Activated CD4-positive, alpha-beta memory T cell treated with anti-CD3 and anti-CD28 coated beads, Interleukin-2, amount 10 ng/mL, durations not matched to agents 7 days and 5 days (primary cell): ENCODE measurements at regions of chr2 and their contacts with region 1.

Region 1: DNA sequence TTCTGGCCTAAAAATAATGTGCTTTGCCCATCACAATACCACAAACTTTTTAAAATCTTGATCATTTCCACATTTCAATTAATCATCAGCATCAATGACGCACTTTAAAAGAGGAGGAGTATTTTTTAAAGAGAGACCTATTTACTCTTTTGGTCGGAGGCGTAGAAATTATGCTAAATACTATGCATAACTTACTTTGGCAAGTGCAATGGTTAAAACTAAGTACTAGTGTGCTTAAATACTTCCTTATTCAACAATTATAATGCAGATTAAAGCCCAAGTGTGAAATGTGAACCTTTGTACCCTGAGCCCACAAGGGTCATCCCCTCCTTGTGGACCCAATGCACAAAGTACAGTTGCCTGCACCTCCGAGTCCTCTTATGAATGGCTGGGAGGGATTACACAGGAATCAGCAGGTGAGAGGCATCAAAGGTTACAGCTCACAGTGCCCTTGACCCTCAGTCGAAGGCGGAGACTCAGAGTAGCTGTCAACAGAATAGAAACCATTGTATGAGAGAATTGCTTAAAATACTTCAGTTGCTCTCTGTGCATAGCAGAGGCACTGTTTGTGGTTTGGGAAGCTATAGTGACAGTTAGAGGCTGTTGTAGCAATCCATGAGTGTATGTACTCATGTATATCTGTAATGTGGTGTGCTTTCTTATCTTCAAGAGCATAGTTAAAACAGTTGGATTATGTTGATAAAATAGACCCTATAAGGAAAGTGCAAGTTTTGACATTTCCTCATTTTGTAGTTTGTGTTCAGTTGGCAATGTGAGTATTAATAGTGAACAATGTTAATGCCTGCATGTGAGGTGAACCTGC is 151.7 kb upstream of the ITGA4 start:
- DNase-seq: peak; percentile 72
- H3K4me3 Mint-ChIP-seq: peak overlapping the region; percentile 47
- H3K27ac Mint-ChIP-seq: peak overlapping the region; percentile 85
- H3K4me1 Mint-ChIP-seq: peaks cover 78% of the 10 kb centered on the region
- H3K27me3 Mint-ChIP-seq: no peaks in the 10 kb centered on the region

Region 2: GRCh38 chr2:180872255-180872654 is 433.3 kb before region 1 on chr2:
- CTCF ChIA-PET with region 1: no interaction called
- POLR2A ChIA-PET with region 1: no interaction called
- DNase-seq: no peak
- H3K4me3 Mint-ChIP-seq: no peak overlapping the region
- H3K27ac Mint-ChIP-seq: no peak overlapping the region
- H3K4me1 Mint-ChIP-seq: no peaks in the 10 kb centered on the region
- H3K27me3 Mint-ChIP-seq: peaks cover 13% of the 10 kb centered on the region

Region 3: DNA sequence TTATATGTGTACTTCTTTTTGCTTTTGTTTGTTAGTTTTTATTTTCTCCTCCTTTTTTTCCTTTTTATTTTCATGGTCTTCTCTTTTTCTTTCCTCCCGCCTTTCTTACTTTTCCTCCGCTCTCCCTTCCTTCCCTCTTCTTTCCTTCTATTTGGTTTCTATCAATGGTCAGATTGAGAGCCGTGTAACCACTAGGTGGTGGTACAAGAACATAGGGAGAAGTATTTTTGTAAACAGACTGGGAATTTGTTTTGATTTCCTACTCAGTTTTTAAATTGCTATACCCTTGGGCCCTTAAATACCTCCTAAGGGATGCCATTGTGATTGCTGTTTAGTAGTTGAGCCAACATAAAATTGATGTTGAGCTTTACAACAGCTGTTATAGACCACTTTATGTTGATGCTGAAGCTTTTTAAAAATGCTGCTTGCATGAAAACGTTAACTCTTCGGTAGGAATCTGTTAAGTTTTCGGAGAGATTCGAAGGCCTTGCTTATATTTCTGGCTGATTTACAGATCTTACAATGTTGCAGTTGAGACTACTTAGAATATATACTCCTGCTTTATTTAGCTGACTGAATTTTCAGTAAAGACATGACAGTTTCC is 200.9 kb before region 1 on chr2:
- CTCF ChIA-PET with region 1: interaction called, 6 read pairs
- POLR2A ChIA-PET with region 1: interaction called, 35 read pairs
- DNase-seq: no peak
- H3K4me3 Mint-ChIP-seq: peak overlapping the region; percentile 19
- H3K27ac Mint-ChIP-seq: peak overlapping the region; percentile 34
- H3K4me1 Mint-ChIP-seq: peaks cover 51% of the 10 kb centered on the region
- H3K27me3 Mint-ChIP-seq: no peaks in the 10 kb centered on the region

Region 4: DNA sequence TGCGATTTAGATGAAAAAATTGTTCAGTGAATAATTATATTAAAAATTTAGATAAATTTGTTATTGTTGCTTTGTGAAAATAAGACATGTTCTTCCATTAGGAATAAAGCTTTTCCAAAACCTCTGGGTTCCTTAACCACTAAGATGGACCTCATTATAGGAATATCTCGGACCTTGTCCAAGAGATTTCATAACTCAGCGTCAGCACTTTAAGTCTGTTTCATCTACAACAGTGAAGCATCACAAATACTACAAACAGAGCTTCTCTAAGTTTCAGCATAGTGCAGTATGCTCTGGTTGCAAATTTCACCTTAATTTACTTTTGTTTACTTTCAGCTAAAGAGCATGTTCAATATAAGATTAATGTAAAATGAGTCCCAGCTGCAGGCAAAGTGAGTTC is 174.8 kb before region 1 on chr2:
- CTCF ChIA-PET with region 1: interaction called, 3 read pairs
- POLR2A ChIA-PET with region 1: interaction called, 134 read pairs
- DNase-seq: no peak
- H3K4me3 Mint-ChIP-seq: peak overlapping the region; percentile 67
- H3K27ac Mint-ChIP-seq: peak overlapping the region; percentile 87
- H3K4me1 Mint-ChIP-seq: peaks cover 65% of the 10 kb centered on the region
- H3K27me3 Mint-ChIP-seq: no peaks in the 10 kb centered on the region

Region 5: DNA sequence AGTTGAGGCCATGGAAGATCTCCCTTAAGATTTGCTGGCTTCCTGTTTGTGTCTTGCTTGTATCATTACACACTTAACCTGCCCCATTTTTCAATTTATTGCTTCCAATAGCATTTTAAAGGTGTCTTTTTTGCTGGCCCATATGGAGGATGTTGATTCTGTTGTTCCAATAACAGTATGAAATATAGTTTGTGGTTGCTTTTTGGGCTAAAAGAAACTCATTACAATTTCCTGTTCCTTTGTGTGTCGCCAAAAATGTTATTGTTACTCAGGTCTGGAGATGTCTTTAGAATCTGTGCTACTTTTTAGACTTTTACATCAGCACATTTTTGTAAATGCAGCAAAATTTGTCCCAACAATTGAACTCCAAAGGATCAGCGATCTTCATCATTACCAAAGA is 82.3 kb before region 1 on chr2:
- CTCF ChIA-PET with region 1: no interaction called
- POLR2A ChIA-PET with region 1: interaction called, 17 read pairs
- DNase-seq: no peak
- H3K4me3 Mint-ChIP-seq: peak overlapping the region; percentile 62
- H3K27ac Mint-ChIP-seq: peak overlapping the region; percentile 97
- H3K4me1 Mint-ChIP-seq: peaks cover 51% of the 10 kb centered on the region
- H3K27me3 Mint-ChIP-seq: no peaks in the 10 kb centered on the region

Region 6: GRCh38 chr2:181241797-181242196 is 63.7 kb before region 1 on chr2:
- CTCF ChIA-PET with region 1: interaction called, 4 read pairs
- POLR2A ChIA-PET with region 1: interaction called, 14 read pairs
- DNase-seq: peak; percentile 26
- H3K4me3 Mint-ChIP-seq: no peak overlapping the region
- H3K27ac Mint-ChIP-seq: peak overlapping the region; percentile 84
- H3K4me1 Mint-ChIP-seq: peaks cover 65% of the 10 kb centered on the region
- H3K27me3 Mint-ChIP-seq: no peaks in the 10 kb centered on the region

Region 7: GRCh38 chr2:181364492-181365170 is 59.1 kb after region 1 on chr2:
- CTCF ChIA-PET with region 1: no interaction called
- POLR2A ChIA-PET with region 1: no interaction called
- DNase-seq: no peak
- H3K4me3 Mint-ChIP-seq: no peak overlapping the region
- H3K27ac Mint-ChIP-seq: no peak overlapping the region
- H3K4me1 Mint-ChIP-seq: no peaks in the 10 kb centered on the region
- H3K27me3 Mint-ChIP-seq: peaks cover 2% of the 10 kb centered on the region